Activated CD4-positive, alpha-beta memory T cell treated with anti-CD3 and anti-CD28 coated beads for 36 hours (primary cell): ENCODE measurements at regions of chr1 and their contacts with region 1.

Region 1: DNA sequence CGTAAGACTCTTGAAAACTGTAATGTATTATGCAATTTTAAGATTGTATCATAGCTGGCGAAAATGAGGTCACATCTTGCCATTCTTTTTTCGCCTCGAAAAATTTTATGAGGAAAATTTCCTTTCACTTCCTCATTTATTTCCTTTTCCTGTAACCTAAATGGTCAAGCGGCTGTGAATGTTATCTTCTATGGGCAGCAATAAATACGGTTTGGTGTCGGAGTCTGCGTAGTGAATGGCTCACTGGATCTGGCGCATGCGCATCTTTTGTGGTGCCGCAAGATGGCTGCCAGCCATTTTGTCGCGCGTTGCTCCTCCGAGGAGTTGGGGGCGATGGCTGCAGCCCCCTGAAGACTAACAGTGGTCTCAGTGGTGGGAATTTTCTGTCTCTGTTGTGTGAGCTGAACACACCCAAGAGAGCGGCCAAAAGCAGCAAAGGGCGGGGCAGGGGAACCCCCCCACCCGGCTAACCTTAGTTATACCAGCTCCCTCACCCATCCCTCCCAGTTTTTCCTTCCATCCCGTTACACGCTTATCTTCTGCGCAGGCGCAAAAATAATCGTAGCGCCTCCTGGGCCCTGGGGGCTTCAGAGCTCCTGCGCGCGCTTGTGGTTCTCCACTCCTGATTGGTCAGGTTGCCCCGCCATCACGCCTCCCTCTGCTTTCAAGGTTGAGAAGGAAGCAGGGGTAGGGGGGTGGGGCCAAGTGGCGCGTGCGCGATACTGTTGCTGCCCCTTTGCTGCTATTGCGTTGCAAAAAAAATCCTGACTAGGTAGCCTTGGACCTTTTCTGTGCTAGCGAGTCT is at the start of gene RPRD2:
- DNase-seq: peak; percentile 100
- H3K4me3 Mint-ChIP-seq: peak within 1 kb of the TSS; percentile 99
- H3K27ac Mint-ChIP-seq: peak within 1 kb of the TSS; percentile 100
- H3K4me1 Mint-ChIP-seq: peaks cover 19% of the 10 kb centered on the region
- H3K27me3 Mint-ChIP-seq: peaks cover 1% of the 10 kb centered on the region
- total RNA-seq, gene RPRD2: 22.2 to 22.6 TPM

Region 2: DNA sequence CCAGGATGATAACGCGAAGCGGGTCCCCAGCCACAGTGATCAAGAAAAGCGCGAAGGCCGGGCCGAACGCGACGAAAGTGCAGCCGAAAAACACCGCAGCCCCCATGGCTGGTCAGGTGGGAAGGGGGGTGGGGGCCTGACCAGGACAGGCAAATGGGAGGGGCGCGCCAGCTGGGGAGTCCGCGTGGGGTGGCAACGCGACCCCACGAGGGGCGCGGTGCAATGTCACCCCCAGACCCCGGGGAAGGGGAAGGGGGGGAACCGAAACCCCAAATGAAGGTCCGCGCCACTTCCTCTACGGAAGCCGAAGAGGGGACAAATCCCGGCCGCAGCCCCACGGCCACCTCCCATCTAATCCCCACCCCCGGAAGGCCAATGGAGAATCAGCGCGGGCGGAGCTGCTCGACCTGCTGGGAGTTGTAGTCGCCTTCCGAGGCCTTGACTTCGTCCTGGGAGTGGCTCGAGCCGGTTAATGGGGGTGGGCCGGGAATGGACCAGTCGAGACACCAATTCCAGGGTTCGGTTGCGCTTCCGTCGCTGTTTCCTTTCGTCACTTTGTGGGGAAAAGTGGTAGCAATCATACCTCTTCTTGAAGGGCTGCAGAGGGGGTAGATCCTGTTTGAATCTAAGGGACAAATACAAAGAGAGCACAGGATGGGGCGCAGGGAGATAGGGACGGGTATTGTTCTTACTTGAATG is 94.8 kb before region 1 on chr1 and contains the start of gene APH1A:
- CTCF ChIA-PET with region 1: no interaction called
- POLR2A ChIA-PET with region 1: interaction called, 5 read pairs
- intact Hi-C with region 1: loop called (anchors 2 kb)
- DNase-seq: peak; percentile 97
- H3K4me3 Mint-ChIP-seq: peak within 1 kb of the TSS; percentile 97
- H3K27ac Mint-ChIP-seq: peak within 1 kb of the TSS; percentile 93
- H3K4me1 Mint-ChIP-seq: peaks cover 22% of the 10 kb centered on the region
- H3K27me3 Mint-ChIP-seq: no peaks in the 10 kb centered on the region
- total RNA-seq, gene APH1A: 96.6 to 96.8 TPM

Region 3: DNA sequence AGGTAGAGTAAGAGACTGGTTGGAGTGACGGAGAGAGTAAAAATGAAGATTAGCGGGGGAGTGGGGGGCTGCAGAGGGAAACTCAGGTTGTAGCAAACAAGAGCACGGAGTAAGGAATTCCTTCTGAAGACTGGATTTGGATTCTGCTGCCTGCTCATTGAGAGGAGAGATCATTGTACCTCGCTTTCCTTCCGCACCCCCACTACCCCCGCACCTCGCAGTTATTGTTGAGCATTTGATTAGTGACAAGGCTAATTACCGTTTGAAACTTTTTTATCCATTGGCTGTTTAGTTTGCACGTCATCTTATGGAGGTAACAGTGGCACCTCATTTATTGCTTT is 41.8 kb before region 1 on chr1:
- CTCF ChIA-PET with region 1: no interaction called
- POLR2A ChIA-PET with region 1: interaction called, 8 read pairs
- intact Hi-C with region 1: loop called (anchors 1 kb)
- DNase-seq: no peak
- H3K4me3 Mint-ChIP-seq: peak overlapping the region; percentile 99
- H3K27ac Mint-ChIP-seq: peak overlapping the region; percentile 97
- H3K4me1 Mint-ChIP-seq: peaks cover 27% of the 10 kb centered on the region
- H3K27me3 Mint-ChIP-seq: no peaks in the 10 kb centered on the region

Region 4: GRCh38 chr1:150332651-150333290 is 30.9 kb before region 1 on chr1:
- CTCF ChIA-PET with region 1: no interaction called
- POLR2A ChIA-PET with region 1: no interaction called
- intact Hi-C with region 1: no loop called
- DNase-seq: no peak
- H3K4me3 Mint-ChIP-seq: no peak overlapping the region
- H3K27ac Mint-ChIP-seq: no peak overlapping the region
- H3K4me1 Mint-ChIP-seq: peaks cover 6% of the 10 kb centered on the region
- H3K27me3 Mint-ChIP-seq: no peaks in the 10 kb centered on the region

Region 5: GRCh38 chr1:150352866-150353265 is 10.8 kb before region 1 on chr1:
- CTCF ChIA-PET with region 1: no interaction called
- POLR2A ChIA-PET with region 1: no interaction called
- intact Hi-C with region 1: no loop called
- DNase-seq: no peak
- H3K4me3 Mint-ChIP-seq: no peak overlapping the region
- H3K27ac Mint-ChIP-seq: no peak overlapping the region
- H3K4me1 Mint-ChIP-seq: no peaks in the 10 kb centered on the region
- H3K27me3 Mint-ChIP-seq: no peaks in the 10 kb centered on the region

Region 6: GRCh38 chr1:150486964-150487762 is 123.5 kb after region 1 on chr1 and contains the start of gene TARS2:
- CTCF ChIA-PET with region 1: no interaction called
- POLR2A ChIA-PET with region 1: no interaction called
- intact Hi-C with region 1: loop called (anchors 1 kb)
- DNase-seq: peak; percentile 98
- H3K4me3 Mint-ChIP-seq: peak within 1 kb of the TSS; percentile 83
- H3K27ac Mint-ChIP-seq: peak within 1 kb of the TSS; percentile 90
- H3K4me1 Mint-ChIP-seq: peaks cover 21% of the 10 kb centered on the region
- H3K27me3 Mint-ChIP-seq: no peaks in the 10 kb centered on the region
- total RNA-seq, gene TARS2: 46.3 to 51.7 TPM

Region 7: DNA sequence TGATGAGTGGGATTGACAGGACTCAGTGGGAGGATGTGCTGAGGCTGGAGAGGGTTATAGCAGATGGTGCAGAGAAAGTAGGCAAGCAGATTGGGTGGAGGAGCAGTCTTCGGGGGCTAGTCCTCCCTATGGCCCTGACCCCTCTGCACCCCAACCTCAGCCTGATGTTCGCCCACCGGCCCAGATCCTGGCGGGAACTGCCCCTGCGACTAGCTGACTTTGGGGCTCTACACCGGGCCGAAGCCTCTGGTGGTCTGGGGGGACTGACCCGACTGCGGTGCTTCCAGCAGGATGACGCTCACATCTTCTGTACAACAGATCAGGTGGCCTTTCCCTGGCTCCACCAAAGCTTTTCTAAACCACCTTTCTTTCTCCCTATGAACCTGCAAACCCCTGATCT is 134.7 kb after region 1 on chr1:
- CTCF ChIA-PET with region 1: no interaction called
- POLR2A ChIA-PET with region 1: no interaction called
- intact Hi-C with region 1: no loop called
- DNase-seq: no peak
- H3K4me3 Mint-ChIP-seq: no peak overlapping the region
- H3K27ac Mint-ChIP-seq: no peak overlapping the region
- H3K4me1 Mint-ChIP-seq: no peaks in the 10 kb centered on the region
- H3K27me3 Mint-ChIP-seq: no peaks in the 10 kb centered on the region

Region 8: GRCh38 chr1:150529017-150529416 is 165.4 kb after region 1 on chr1:
- CTCF ChIA-PET with region 1: no interaction called
- POLR2A ChIA-PET with region 1: no interaction called
- intact Hi-C with region 1: no loop called
- DNase-seq: no peak
- H3K4me3 Mint-ChIP-seq: no peak overlapping the region
- H3K27ac Mint-ChIP-seq: no peak overlapping the region
- H3K4me1 Mint-ChIP-seq: no peaks in the 10 kb centered on the region
- H3K27me3 Mint-ChIP-seq: no peaks in the 10 kb centered on the region

Region 9: DNA sequence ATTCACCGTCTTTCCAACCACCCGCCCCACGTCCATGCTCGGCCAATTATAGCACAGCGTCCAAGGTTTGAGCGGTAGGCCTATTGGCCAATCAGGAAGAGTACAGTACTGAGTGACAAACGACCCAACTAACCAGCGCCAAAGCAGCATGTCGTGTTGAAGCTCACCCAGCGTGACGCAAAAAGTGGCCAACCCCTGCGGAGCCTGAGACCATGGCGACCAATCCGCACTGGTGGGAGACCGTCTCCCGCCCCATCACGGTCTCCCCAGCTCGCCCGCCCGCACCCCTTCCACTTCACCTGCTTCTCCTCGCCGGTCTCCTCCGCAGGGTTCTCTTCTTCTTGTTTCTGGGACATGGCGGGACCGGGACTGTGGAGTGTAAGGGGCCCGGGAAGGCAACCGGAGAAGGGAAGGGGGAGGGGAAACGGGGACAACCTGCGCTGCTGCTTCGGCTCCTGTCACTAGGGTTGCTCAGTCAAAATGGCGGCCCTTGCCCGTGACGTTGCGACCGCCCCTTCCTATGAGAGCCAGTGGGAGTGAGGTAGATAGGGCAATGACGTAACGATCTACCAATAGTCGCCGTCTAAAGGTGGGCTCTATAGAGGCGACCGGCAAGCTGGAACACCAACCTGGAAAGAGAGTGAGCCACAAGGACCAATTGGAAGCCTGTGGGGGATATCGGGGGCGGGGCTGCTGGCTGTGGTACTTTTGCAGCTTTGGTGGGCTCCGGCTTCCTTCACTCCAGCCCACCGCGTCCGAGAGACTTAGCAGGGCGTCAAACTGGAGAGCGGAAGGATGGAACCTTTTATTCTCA is 265.7 kb after region 1 on chr1 and contains the start of gene ENSA:
- CTCF ChIA-PET with region 1: no interaction called
- POLR2A ChIA-PET with region 1: interaction called, 3 read pairs
- intact Hi-C with region 1: loop called (anchors 5 kb)
- DNase-seq: peak; percentile 97
- H3K4me3 Mint-ChIP-seq: no peak within 1 kb of the TSS
- H3K27ac Mint-ChIP-seq: no peak within 1 kb of the TSS
- H3K4me1 Mint-ChIP-seq: peaks cover 41% of the 10 kb centered on the region
- H3K27me3 Mint-ChIP-seq: no peaks in the 10 kb centered on the region
- total RNA-seq, gene ENSA: 212 to 219 TPM

Region 10: GRCh38 chr1:151059078-151059907 is 695.7 kb after region 1 on chr1 and contains the start of gene CDC42SE1:
- CTCF ChIA-PET with region 1: no interaction called
- POLR2A ChIA-PET with region 1: no interaction called
- intact Hi-C with region 1: loop called (anchors 10 kb)
- DNase-seq: peak; percentile 89
- H3K4me3 Mint-ChIP-seq: peak within 1 kb of the TSS; percentile 98
- H3K27ac Mint-ChIP-seq: peak within 1 kb of the TSS; percentile 99
- H3K4me1 Mint-ChIP-seq: peaks cover 56% of the 10 kb centered on the region
- H3K27me3 Mint-ChIP-seq: no peaks in the 10 kb centered on the region
- total RNA-seq, gene CDC42SE1: 135 to 136 TPM